ENCODE measurements at regions of chr20 and their contacts with region 1.

Region 1: DNA sequence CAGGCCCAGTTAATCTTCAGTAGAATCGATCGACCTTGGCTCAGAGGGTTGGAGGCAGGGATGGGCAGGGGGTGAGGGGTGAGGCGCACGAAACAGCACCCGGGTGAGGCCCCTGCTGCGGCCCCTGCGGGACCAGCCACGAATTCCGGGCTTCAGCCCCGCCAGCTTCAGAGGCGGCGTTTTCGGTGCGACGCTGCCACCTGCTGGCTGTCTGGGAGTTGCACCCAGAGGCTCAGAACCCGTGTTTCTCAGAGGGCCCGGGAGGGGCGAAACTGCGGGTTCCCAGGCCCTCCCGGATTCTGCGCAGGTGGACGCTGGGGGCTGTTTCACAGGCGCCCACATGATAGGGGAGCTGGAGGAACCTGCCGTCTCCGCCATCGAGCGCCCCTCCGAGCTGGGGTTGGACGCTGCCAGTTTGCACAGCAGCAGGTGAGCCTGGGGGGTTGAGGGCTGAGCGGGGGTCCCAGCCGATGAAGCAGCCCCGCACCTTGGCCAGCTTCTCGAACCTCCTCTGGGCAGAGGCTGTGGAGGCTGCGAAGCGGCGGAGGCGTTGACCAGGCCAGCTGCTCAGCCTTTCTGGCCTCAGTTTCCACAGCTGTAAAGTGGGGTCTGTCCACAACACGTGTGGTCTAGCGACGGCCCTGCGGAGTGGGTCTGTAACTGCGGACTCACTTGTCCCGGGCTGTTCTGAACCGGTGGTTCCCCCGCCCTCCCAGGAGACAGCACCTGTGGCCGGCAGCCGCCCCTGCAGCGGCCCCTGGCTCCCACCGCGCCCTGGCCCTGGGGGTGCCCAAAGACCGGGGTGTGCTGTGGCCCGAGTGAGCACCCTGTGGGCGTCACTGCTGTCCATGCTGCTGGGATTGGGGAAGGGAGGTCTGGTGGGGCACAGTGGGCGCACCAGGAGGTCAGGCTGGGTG is 2.5 kb upstream of the BHLHE23 start:
- DNase-seq: peak; percentile 87
- ATAC-seq: peak; percentile 73
- H3K4me3 Mint-ChIP-seq: peak overlapping the region; percentile 12
- H3K27ac Mint-ChIP-seq: no peak overlapping the region
- H3K4me1 Mint-ChIP-seq: peaks cover 30% of the 10 kb centered on the region
- H3K27me3 Mint-ChIP-seq: peaks cover 58% of the 10 kb centered on the region

Region 2: GRCh38 chr20:62900052-62900691 is 109.1 kb before region 1 on chr20:
- CTCF ChIA-PET with region 1: interaction called, 10 read pairs
- POLR2A ChIA-PET with region 1: no interaction called
- DNase-seq: peak; percentile 84
- ATAC-seq: peak; percentile 95
- H3K4me3 Mint-ChIP-seq: no peak overlapping the region
- H3K27ac Mint-ChIP-seq: peak overlapping the region; percentile 80
- H3K4me1 Mint-ChIP-seq: peaks cover 51% of the 10 kb centered on the region
- H3K27me3 Mint-ChIP-seq: no peaks in the 10 kb centered on the region

Region 3: DNA sequence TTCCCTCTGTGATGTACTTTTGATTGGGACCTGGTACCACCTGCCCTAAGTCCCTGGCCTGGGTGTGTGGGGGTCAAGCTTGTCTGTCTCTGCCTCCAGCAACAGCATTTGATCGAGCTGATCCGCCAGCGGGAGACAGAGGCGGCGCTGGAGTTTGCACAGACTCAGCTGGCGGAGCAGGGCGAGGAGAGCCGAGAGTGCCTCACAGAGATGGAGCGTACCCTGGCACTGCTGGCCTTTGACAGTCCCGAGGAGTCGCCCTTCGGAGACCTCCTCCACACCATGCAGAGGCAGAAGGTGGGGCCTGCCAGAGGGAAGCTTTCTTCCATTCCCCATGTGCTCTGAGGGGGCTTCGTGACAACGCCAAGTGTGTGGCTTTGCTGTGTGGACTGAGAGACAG is 65.9 kb before region 1 on chr20:
- CTCF ChIA-PET with region 1: no interaction called
- POLR2A ChIA-PET with region 1: no interaction called
- DNase-seq: no peak
- ATAC-seq: no peak
- H3K4me3 Mint-ChIP-seq: no peak overlapping the region
- H3K27ac Mint-ChIP-seq: no peak overlapping the region
- H3K4me1 Mint-ChIP-seq: peaks cover 24% of the 10 kb centered on the region
- H3K27me3 Mint-ChIP-seq: no peaks in the 10 kb centered on the region

Region 4: DNA sequence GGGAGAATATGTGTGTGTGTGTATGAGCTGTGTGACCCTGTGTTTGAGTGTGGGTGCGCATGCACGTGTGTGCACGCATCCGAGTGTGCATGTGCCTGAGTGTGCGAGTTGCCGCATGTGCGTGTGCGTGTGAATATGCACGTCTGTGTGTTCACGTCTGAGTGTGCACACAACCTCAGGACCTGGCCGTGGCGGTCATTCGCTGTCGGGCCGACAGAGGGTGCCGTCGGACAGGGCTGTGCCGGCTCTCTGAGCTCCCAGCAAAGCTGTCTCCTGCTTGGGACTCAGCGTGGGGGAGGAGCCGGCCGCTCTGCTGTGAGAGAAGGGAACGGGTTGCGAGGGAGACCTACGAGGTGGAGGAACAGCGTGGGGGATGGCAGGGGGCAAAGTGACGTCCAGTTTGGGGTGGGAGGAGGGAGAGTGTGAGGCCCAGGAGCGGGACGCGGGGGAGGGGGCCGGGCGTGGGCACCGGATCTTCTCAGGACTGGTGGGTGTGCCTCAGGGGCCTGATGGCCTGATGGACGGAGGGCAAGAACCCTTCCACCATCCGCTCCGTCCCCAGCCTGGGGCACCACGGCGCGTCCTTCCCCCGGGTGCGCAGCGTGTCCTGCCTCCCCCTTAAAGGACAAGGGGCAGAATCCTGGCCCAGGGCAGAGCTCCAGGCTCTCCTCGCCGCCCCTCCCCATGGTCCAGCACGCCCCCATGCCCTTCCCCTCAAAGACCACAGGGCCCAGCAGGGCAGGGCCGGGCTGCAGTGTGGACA is 36.9 kb before region 1 on chr20:
- CTCF ChIA-PET with region 1: interaction called, 56 read pairs
- POLR2A ChIA-PET with region 1: interaction called, 7 read pairs
- DNase-seq: peak; percentile 90
- ATAC-seq: peak; percentile 97
- H3K4me3 Mint-ChIP-seq: peak overlapping the region; percentile 19
- H3K27ac Mint-ChIP-seq: no peak overlapping the region
- H3K4me1 Mint-ChIP-seq: peaks cover 12% of the 10 kb centered on the region
- H3K27me3 Mint-ChIP-seq: peaks cover 42% of the 10 kb centered on the region

Region 5: DNA sequence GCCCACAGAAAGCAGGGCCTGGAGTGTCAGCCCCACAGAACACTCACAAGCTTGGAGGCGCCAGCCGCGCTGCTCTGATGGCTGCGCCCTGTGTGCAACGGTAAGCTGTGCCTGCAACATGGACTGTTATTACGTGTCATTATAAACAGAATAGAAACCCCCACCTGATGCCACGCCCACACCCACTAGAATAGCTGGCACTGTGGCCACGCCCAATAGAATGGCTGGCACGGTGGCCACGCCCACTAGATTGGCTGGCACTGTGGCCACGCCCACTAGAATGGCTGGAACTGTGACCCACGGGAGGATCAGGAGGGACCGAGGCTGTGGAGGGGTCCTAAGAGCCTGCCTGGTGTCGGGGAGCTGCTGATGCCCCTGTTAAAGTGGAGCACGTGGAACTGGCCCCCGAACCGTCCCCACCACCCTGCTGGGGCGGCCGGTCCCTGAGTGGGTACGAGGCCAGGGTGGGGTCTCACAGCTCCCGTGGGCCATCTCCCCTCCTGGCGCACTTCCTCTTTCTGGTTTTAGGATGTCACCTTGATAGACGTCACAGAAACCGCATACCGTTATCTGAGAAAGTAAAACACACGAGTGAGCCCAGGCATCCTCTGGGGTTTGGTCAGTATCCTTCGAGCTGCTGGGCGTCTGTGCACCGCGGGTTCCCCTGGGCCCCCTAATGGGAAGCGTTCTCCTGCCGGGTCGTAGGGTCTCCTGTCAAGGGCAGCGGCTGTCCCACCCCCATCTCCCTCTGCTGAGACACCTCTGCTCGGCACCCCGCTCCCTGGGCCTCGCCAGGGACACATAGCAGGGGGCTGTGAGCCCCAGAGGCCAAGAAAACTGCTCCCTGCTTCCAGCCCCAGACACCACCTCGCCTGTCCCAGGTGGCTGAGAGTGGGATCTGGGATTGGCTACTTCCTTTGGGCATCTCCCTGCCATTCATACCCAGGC is 31.4 kb before region 1 on chr20:
- CTCF ChIA-PET with region 1: interaction called, 56 read pairs
- POLR2A ChIA-PET with region 1: interaction called, 7 read pairs
- DNase-seq: peak; percentile 71
- ATAC-seq: peak; percentile 57
- H3K4me3 Mint-ChIP-seq: peak overlapping the region; percentile 12
- H3K27ac Mint-ChIP-seq: peak overlapping the region; percentile 46
- H3K4me1 Mint-ChIP-seq: peaks cover 47% of the 10 kb centered on the region
- H3K27me3 Mint-ChIP-seq: peaks cover 56% of the 10 kb centered on the region